HEK293 (cell line): ENCODE measurements at regions of chr7 and their contacts with region 1.

Region 1: DNA sequence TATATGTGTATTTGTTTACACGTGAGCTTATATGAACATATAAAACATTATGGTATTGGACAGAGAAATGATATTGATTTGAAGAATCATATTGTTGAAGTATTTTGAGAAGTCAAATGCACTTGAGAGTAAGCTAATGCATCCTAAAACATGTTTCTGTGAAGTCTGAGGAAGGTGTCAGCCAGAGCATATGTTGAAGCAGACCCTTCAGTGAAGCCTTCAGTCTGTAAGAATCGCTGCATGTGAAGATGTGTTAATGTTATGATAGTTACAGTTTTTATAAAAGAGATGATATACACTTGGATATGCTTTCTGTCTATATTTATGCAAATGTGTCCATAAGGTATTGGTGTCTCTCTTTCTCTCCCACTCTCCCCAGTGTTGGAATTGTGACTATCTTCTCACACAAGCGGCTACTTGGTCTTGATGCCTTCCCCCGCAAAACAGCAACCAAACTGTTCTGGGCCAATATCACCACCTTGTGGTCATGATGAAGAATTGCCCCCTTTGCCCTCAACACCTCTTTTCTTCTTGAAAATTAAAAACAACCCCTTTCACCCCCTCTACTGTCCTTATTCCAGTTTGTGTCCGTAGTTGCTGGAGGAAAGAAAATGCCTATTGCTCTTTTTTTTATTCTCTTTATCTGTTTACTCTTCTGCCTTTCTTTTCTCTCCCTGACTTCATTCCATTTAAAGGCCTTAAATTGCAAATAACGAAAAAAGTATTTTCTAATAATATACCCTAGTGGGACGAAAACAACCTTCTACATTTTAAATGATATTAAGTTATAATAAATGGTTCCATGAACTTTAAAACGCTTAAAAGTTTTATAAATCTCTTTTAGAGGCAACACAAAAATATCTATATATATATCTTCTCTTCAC is 64.9 kb downstream of the IKZF1 start:
- H3K4me3 ChIP-seq: no peak overlapping the region
- H3K27ac ChIP-seq: no peak overlapping the region
- H3K4me1 ChIP-seq: no peaks in the 10 kb centered on the region
- CTCF ChIP-seq: peak; percentile 30; the same call in 1 of the 2 replicates

Region 2: GRCh38 chr7:50092579-50093491 is 276.6 kb before region 1 on chr7 and contains the start of gene ZPBP:
- CTCF ChIA-PET with region 1: interaction called, 12 read pairs
- POLR2A ChIA-PET with region 1: no interaction called
- H3K4me3 ChIP-seq: no peak within 1 kb of the TSS
- H3K27ac ChIP-seq: no peak within 1 kb of the TSS
- H3K4me1 ChIP-seq: no peaks in the 10 kb centered on the region
- CTCF ChIP-seq: 0 out of 2 replicates have a peak, but pooled peaks have one; percentile 17

Region 3: GRCh38 chr7:50206453-50207250 is 162.7 kb before region 1 on chr7:
- CTCF ChIA-PET with region 1: interaction called, 27 read pairs
- POLR2A ChIA-PET with region 1: no interaction called
- H3K4me3 ChIP-seq: no peak overlapping the region
- H3K27ac ChIP-seq: no peak overlapping the region
- H3K4me1 ChIP-seq: no peaks in the 10 kb centered on the region
- CTCF ChIP-seq: no peak